A673 (cell line): ENCODE measurements at regions of chr12 and their contacts with region 1.

Region 1: GRCh38 chr12:1644534-1645438 is 15.8 kb downstream of the WNT5B start:
- DNase-seq: peak; percentile 67
- H3K4me3 ChIP-seq: no peak overlapping the region
- H3K27ac ChIP-seq: no peak overlapping the region
- H3K4me1 ChIP-seq: peaks cover 8% of the 10 kb centered on the region
- H3K27me3 ChIP-seq: no peaks in the 10 kb centered on the region
- CTCF ChIP-seq: no peak

Region 2: GRCh38 chr12:1533602-1534304 is 111.0 kb before region 1 on chr12:
- CTCF ChIA-PET with region 1: no interaction called
- POLR2A ChIA-PET with region 1: no interaction called
- intact Hi-C with region 1: no loop called
- DNase-seq: peak; percentile 41
- H3K4me3 ChIP-seq: peak overlapping the region; percentile 14
- H3K27ac ChIP-seq: no peak overlapping the region
- H3K4me1 ChIP-seq: peaks cover 10% of the 10 kb centered on the region
- H3K27me3 ChIP-seq: peaks cover 34% of the 10 kb centered on the region
- CTCF ChIP-seq: no peak

Region 3: GRCh38 chr12:2574355-2574935 is 929.7 kb after region 1 on chr12:
- CTCF ChIA-PET with region 1: no interaction called
- POLR2A ChIA-PET with region 1: no interaction called
- intact Hi-C with region 1: loop called (anchors 10 kb)
- DNase-seq: no peak
- H3K4me3 ChIP-seq: no peak overlapping the region
- H3K27ac ChIP-seq: no peak overlapping the region
- H3K4me1 ChIP-seq: no peaks in the 10 kb centered on the region
- H3K27me3 ChIP-seq: peaks cover 27% of the 10 kb centered on the region
- CTCF ChIP-seq: no peak